ENCODE measurements at regions of chr17 and their contacts with region 1.

Region 1: DNA sequence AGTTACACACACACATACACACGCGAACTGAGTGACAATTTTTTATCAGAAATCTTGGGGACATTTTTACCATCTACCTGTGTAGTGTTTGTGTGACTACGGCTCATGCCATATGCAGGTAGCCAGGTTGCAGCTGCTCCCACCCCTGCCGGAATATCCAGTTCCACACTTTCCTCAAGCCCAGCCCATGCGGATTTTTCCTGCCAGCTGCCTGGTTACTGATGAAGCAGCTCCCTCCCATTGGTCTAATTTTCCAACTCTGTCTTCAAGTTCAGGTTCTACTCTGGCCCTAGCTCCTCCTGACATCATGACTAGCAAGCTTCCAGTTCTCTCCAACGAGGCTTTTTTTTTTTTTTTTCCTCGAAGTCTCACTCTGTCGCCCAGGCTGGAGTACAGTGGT is 4.8 kb downstream of the GSG1L2 start:
- DNase-seq: no peak
- ATAC-seq: no peak
- H3K4me3 Mint-ChIP-seq: no peak overlapping the region
- H3K27ac Mint-ChIP-seq: no peak overlapping the region
- H3K4me1 Mint-ChIP-seq: no peaks in the 10 kb centered on the region
- H3K27me3 Mint-ChIP-seq: peaks cover 6% of the 10 kb centered on the region

Region 2: GRCh38 chr17:9755083-9755482 is 62.0 kb before region 1 on chr17:
- CTCF ChIA-PET with region 1: no interaction called
- POLR2A ChIA-PET with region 1: no interaction called
- intact Hi-C with region 1: loop called in 1 of 2 experiments (anchors 10 kb)
- DNase-seq: no peak
- ATAC-seq: no peak
- H3K4me3 Mint-ChIP-seq: no peak overlapping the region
- H3K27ac Mint-ChIP-seq: no peak overlapping the region
- H3K4me1 Mint-ChIP-seq: no peaks in the 10 kb centered on the region
- H3K27me3 Mint-ChIP-seq: peaks cover 23% of the 10 kb centered on the region

Region 3: DNA sequence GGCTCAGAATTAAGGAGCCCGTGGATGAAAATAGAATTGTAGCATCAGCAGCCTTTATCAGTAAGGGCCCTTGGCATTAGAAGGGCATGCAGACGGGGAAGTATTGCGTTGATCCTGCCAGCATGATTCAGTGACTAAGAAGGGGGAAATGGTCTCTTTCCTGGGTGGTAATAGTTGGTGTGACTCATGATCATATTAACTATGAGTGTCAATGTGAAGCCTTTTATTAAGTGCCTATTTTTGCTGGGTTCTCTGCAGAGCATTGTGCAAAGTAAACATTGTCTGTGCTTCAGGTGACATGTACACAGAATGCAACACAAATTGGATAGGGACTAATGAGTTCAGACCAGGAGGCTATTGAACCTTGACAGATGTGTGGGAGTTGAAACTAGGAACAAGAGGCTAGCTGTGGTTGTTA is 63.5 kb after region 1 on chr17:
- CTCF ChIA-PET with region 1: no interaction called
- POLR2A ChIA-PET with region 1: no interaction called
- intact Hi-C with region 1: no loop called
- DNase-seq: no peak
- ATAC-seq: no peak
- H3K4me3 Mint-ChIP-seq: no peak overlapping the region
- H3K27ac Mint-ChIP-seq: no peak overlapping the region
- H3K4me1 Mint-ChIP-seq: no peaks in the 10 kb centered on the region
- H3K27me3 Mint-ChIP-seq: no peaks in the 10 kb centered on the region

Measured in activated CD4-positive, alpha-beta T cell treated with anti-CD3 and anti-CD28 coated beads for 36 hours (primary cell).